Activated CD4-positive, alpha-beta T cell treated with anti-CD3 and anti-CD28 coated beads, Interleukin-2, amount 10 ng/mL, durations not matched to agents 24 days and 14 days (primary cell): ENCODE measurements at regions of chr15 and their contacts with region 1.

Region 1: GRCh38 chr15:45522328-45523160 is at the start of gene SLC30A4:
- DNase-seq: peak; percentile 92
- H3K4me3 Mint-ChIP-seq: peak within 1 kb of the TSS; percentile 85
- H3K27ac Mint-ChIP-seq: peak within 1 kb of the TSS; percentile 72
- H3K4me1 Mint-ChIP-seq: peaks cover 19% of the 10 kb centered on the region
- H3K27me3 Mint-ChIP-seq: peaks cover 25% of the 10 kb centered on the region
- total RNA-seq, gene SLC30A4: 0.90 and 1.2 TPM in 2 replicates

Region 2: DNA sequence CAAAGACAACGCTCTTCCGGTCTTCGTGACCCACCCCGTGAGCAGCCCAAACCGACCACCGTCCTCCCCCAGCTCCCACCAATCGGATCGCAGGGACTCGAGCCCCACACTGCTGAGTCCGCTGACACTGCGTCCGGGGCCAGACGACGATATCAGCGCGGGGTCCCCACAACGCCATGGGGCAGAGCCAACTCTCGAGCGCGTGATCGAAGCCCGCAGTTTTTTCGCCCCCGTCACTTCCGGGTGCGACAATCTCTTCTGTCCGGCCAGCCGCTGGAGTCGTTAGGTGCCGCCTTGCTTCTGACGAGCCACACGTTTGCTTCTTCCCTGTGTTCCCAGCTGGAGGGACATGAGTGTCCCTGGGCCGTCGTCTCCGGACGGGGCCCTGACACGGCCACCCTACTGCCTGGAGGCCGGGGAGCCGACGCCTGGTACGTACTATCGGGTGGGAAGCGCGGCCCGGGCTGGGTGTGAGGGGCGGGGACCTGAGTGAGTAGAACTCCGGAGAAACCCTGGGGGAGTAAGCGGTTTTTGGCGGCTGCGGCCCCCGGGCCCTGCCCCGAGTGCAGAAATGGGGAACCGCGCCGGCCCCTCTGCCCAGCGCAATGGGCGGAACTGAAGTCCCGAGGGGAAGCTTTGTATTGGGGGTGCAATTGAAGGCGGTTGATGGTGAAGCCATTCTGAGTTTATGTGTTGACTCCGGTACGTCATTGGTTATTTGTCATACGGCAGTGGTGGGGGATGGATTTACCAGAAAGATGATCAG is 64.7 kb after region 1 on chr15 and contains the start of gene BLOC1S6:
- intact Hi-C with region 1: loop called (anchors 2 kb)
- DNase-seq: peak; percentile 96
- H3K4me3 Mint-ChIP-seq: peak within 1 kb of the TSS; percentile 99
- H3K27ac Mint-ChIP-seq: peak within 1 kb of the TSS; percentile 100
- H3K4me1 Mint-ChIP-seq: peaks cover 31% of the 10 kb centered on the region
- H3K27me3 Mint-ChIP-seq: no peaks in the 10 kb centered on the region
- total RNA-seq, gene BLOC1S6: 42.8 and 44.8 TPM in 2 replicates

Region 3: DNA sequence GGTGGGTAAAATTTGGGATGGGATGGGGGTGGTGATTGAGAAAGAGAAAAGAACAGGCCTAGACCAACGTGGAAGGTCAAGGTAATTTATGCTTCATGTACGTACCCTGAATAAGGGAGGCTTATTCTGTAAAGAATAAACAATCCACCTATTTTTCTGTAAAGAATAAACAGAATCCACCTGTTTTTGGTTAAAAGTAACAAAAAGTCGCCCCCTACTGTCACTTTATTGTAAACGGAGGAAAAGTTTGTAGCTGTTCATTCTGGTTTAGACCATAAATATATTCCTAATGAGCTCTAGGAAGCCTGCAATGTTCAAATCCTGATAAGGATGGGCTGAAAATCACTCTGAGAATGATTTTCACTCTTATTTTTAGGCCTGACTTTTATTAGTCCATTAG is 88.8 kb after region 1 on chr15:
- intact Hi-C with region 1: loop called (anchors 5 kb)
- DNase-seq: peak; percentile 66
- H3K4me3 Mint-ChIP-seq: no peak overlapping the region
- H3K27ac Mint-ChIP-seq: peak overlapping the region; percentile 15
- H3K4me1 Mint-ChIP-seq: peaks cover 10% of the 10 kb centered on the region
- H3K27me3 Mint-ChIP-seq: no peaks in the 10 kb centered on the region

Region 4: DNA sequence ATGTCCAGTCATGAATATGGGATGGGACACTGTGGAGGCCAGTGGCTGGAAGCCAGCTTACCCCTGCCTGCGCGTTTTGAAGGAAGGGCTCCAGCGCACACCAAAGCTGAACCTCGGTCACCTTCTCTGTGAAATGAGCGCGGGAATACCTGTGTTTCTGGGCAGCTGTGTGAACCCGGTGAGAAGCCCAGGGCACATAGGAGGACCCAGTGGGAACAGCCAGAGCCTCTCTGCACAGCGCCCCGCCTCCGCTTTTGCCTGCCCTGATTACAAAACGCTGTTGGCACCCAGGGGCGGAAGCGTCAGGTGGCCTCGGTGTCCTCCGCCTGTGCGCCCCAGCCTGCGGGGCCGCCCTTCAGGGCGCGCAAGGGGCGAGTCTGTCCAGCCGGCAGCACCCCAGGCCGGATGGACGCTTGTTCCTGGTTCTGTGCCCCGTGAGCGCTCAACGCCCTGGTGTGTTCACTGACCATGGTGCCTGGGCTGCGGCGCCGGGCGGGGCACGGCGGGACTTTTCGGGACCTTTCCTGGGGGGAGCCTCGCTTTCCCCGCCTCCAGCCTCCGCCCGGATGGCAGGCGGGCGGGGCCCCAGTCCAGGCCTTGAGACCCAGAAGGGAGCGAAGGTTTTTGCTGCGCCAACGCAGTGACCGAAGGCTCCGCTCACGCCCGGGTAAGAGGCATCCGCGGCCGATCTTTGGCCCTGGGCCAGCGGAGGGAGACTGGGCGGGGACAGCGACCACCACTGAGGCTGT is 112.1 kb after region 1 on chr15 and contains the start of gene SQOR:
- intact Hi-C with region 1: loop called (anchors 2 kb)
- DNase-seq: peak; percentile 92
- H3K4me3 Mint-ChIP-seq: peak within 1 kb of the TSS; percentile 100
- H3K27ac Mint-ChIP-seq: peak within 1 kb of the TSS; percentile 98
- H3K4me1 Mint-ChIP-seq: peaks cover 38% of the 10 kb centered on the region
- H3K27me3 Mint-ChIP-seq: peaks cover 2% of the 10 kb centered on the region
- total RNA-seq, gene SQOR: 103 and 108 TPM in 2 replicates